PC-9 (cell line): ENCODE measurements at regions of chr14 and their contacts with region 1.

Region 1: DNA sequence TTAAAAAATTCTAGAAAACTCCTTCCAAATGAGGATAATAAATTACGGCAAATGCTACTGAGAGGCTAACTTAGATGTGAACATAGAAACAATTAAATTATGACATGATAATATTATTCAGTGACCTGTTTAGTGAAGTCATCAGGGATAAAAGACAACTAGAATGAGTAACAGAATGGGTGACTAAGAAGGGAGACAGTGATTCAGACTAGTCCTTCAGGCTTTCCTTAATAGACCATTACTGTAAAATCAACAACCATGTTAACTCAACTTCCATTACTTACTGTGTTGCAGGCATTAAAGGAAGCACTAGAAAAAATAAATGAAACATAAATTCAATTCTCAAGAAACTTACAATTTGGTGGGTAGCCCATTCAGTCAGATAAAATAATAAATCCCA is 543.9 kb upstream of the LRFN5 start:
- DNase-seq: no peak
- H3K4me3 ChIP-seq: no peak overlapping the region
- H3K27ac ChIP-seq: no peak overlapping the region
- H3K4me1 ChIP-seq: no peaks in the 10 kb centered on the region
- H3K27me3 ChIP-seq: no peaks in the 10 kb centered on the region
- CTCF ChIP-seq: no peak

Region 2: GRCh38 chr14:41016213-41016612 is 46.6 kb before region 1 on chr14:
- CTCF ChIA-PET with region 1: no interaction called
- POLR2A ChIA-PET with region 1: no interaction called
- intact Hi-C with region 1: loop called (anchors 2 kb)
- DNase-seq: no peak
- H3K4me3 ChIP-seq: no peak overlapping the region
- H3K27ac ChIP-seq: no peak overlapping the region
- H3K4me1 ChIP-seq: no peaks in the 10 kb centered on the region
- H3K27me3 ChIP-seq: no peaks in the 10 kb centered on the region
- CTCF ChIP-seq: no peak

Region 3: GRCh38 chr14:41201721-41202120 is 138.9 kb after region 1 on chr14:
- CTCF ChIA-PET with region 1: no interaction called
- POLR2A ChIA-PET with region 1: no interaction called
- intact Hi-C with region 1: no loop called
- DNase-seq: no peak
- H3K4me3 ChIP-seq: no peak overlapping the region
- H3K27ac ChIP-seq: no peak overlapping the region
- H3K4me1 ChIP-seq: no peaks in the 10 kb centered on the region
- H3K27me3 ChIP-seq: no peaks in the 10 kb centered on the region
- CTCF ChIP-seq: no peak

Region 4: GRCh38 chr14:42078345-42078744 is 1015.5 kb after region 1 on chr14:
- CTCF ChIA-PET with region 1: no interaction called
- POLR2A ChIA-PET with region 1: no interaction called
- intact Hi-C with region 1: no loop called
- DNase-seq: no peak
- H3K4me3 ChIP-seq: no peak overlapping the region
- H3K27ac ChIP-seq: no peak overlapping the region
- H3K4me1 ChIP-seq: no peaks in the 10 kb centered on the region
- H3K27me3 ChIP-seq: no peaks in the 10 kb centered on the region
- CTCF ChIP-seq: no peak